ENCODE measurements at regions of chr6 and their contacts with region 1.

Region 1: DNA sequence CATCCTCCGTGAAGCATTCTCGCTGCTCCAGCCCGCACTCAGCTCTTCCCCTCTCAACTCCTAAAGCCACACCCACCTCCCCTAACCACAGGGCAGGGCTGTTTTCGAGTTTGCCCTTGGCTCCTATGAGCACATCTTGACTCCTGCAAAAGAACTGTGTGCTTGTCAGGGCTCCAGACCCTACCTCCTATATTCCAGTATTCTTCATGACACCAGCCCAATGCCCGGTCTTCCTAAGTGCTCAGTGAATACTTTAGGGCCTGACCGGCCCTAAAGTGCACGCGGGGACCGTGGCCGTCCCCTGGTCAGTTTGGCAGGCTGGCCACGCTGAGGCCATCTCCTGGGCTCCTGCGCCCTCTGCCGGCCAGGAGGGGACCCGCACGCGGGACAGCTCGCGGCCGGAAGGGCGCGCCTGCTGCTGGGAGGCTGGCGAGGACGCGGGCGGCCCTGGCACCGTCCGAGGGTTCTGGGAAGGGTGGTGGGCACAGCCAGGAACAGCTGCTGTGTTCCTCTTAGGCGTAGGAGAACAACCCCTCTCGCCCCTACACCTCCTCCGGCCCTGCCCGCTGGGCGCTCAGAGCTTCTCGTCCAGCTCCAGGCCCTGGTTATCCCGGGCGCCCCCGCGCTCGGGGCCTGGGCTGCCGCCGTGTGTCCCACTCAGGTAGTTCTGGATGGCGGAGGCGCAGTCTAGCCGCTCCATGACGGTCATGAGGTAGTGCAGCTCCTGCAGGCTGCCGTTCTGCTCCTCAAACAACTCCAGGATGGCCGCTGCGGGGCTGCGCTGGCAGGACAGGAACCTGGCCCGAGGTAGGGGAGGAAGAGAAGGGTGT is 11.0 kb downstream of the UNC5CL start:
- DNase-seq: peak; percentile 95

Region 2: DNA sequence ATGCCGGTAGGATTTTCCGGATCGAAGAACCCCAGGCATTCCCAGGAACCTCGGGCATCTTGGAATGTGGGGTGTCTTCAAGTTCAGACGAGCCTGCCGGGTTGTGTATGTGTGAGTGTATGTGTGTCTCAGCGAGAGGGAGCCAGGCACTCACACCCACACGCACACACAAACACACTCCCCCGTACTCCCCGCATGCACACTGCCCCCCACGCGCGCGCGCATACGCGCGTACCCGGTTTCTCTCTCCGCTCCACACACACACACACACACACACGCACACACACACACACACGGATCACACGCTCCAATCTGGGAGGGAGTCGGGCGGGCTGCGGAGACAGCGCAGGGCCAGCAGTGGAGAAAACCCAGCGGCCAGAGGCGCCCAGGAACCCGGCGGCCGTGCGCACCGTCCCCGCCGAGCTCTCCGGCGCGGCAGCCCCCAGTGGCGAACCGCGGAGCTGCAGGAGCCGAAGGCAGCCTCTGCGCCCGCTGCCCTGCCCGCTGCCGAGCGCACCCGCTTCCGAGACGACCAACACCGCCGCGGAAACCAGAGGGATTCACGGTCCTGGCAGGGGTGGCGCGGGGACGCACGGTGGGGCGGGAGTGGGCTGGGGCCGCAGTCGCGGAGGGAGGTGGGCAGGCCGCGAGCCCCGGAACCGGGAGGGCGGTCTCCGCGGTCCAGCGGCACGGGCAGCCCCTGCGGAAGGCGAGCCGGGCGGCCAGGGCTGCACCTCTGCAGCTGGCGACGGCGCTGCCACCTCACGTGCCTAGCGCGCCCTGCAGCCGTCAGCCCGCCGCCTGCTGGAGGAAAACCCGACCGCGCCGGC is 440.6 kb before region 1 on chr6 and contains the start of gene LRFN2:
- intact Hi-C with region 1: loop called (anchors 5 kb)
- DNase-seq: no peak
- total RNA-seq, gene LRFN2: not detected

Region 3: GRCh38 chr6:40841721-40842120 is 186.3 kb before region 1 on chr6:
- intact Hi-C with region 1: no loop called
- DNase-seq: no peak

Region 4: DNA sequence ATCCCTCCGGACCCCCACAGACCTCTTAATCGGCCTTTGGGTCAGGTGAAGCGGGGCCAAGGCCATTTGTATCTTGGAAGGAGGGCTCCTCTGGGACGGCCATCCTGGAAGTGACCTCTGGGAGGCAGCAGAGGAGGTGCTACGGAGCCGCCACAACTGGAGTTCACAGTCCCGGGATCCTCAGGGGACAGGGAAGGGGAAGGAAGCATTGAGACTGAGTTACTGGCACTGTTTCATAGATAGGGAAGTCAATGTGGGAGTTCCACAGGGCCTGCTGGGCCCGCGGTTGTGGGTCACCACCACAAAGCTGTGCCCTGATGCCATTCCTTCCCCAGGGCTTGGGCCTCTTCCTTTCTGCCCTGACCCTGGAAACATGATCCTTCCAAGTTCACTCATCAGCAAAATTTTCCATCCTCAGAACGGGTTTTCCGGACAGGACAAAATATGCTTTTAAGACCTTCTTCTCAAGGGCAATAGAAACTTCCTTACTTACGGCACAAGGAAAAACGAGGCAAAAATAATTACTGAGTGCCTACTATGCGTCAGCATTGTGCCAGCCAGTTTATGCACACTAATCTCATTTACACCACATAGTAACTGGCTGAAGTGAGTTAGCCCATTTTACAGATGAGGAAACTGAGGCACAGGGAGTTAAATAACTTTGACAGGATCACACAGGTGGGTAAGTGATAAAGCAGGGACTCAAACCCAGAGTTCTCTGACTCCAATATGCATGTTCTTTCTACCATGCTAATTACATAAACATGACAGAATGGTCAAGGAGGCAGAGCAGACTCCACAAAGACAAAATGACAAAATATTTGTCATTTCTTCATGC is 132.8 kb before region 1 on chr6:
- intact Hi-C with region 1: loop called (anchors 2 kb)
- DNase-seq: no peak

Region 5: DNA sequence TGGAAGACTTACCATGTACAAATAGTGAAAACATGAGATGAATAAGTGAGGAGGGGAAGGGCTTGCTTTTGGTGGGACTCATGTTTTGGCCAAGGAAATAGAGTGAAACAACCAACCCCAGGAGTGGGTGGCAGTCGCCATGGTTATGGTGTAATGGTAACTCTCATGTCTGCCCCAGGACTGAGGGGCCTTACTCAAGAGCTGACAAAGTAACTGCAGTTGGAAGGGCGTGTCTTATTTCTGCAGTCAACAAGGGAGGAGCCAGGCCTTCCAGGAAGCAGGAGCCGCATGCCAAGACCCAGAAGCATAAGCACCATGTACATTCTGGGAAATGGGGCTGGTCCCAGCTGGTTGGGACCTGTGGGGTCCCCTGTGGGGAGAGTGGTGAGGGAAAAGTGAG is 97.5 kb before region 1 on chr6:
- intact Hi-C with region 1: loop called (anchors 1 kb)
- DNase-seq: no peak

Region 6: DNA sequence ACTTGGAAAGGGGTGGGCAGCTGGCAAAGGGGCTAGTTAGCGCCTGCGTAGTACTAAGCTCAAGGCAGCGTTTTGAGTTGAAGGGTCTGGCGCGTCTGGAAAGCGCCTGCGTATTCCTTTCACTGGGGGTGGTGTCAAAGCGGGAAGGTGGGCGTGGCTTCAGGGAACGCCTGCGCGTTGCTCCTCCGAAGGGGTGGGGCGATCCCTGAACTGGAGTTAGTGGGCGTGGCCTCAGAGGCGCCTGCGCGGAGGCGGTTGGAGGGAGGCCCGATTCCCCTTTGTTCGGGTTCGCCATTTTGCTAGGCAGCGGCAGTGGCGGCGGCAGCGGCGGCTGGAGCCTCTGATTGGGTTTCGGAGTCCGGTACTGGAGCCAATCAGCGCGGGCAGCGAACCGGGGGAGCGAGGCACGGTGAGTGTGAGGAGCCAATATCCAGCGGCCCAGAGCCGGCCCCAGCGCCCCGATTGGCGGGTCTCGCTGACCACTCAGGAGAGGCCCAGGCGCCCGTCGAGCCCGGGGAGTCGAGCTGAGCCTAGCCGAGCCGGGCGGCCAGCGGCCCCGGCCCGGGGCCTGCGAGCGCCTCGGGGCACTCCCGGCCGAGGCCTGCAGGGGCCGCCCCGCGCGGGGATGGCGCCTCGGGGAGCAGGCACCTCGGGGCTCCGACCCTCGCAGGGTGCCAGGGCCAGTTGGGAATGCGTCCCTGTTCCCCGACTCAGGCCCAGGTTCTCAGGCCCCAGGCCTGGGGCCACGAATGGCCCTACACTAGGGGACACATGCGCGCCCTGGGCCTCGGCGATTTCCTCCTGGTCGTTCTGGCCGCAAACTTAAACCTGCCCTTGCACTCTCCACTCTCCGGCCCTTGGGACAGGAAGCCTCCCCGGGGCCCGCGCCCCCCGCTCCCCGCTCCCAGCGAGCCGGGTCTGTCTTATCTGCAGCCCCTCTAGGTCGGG is 44.9 kb after region 1 on chr6 and contains the start of gene NFYA:
- intact Hi-C with region 1: loop called (anchors 2 kb)
- DNase-seq: peak; percentile 100
- total RNA-seq, gene NFYA: 12.9 TPM